Calu3 (cell line): ENCODE measurements at regions of chr15 and their contacts with region 1.

Region 1: DNA sequence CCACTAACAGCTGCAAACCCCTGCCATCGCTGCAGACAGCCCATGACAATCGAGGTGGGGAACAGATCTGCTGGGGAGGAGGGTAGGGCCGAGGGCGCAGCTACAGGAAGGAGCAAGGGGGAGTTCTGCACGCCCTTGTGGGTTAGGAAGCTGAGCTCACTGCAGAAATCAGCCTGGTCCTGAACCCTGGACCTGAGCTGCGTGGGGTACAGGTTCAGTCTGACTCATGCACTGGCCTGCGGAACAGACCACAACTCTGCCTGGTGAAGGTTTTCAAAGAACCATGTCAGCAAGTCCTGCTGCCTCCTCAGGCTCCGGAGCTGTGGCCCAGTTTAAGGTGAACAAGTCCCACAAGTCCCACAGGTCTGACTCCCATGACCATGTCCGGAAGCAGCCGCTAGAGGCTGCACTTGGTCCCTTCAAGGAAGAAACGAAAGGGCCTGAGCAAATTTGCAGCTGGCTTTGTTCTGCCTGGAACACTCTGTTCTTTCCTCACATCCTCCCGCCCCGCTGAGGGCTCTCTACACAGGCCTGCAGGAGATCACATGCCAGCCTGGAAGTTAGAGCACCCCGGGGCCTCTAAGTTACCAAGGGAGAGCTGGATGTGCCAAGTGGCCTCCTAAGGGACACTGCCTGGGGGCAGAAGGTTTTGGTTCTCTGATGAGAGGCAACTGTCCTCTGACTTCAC is 49.4 kb upstream of the AKAP13 start:
- DNase-seq: peak; percentile 89
- H3K4me3 Mint-ChIP-seq: peak overlapping the region; percentile 1
- H3K27ac Mint-ChIP-seq: peak overlapping the region; percentile 47
- H3K4me1 Mint-ChIP-seq: peaks cover 47% of the 10 kb centered on the region
- H3K27me3 Mint-ChIP-seq: no peaks in the 10 kb centered on the region
- CTCF ChIP-seq: peak; percentile 65

Region 2: DNA sequence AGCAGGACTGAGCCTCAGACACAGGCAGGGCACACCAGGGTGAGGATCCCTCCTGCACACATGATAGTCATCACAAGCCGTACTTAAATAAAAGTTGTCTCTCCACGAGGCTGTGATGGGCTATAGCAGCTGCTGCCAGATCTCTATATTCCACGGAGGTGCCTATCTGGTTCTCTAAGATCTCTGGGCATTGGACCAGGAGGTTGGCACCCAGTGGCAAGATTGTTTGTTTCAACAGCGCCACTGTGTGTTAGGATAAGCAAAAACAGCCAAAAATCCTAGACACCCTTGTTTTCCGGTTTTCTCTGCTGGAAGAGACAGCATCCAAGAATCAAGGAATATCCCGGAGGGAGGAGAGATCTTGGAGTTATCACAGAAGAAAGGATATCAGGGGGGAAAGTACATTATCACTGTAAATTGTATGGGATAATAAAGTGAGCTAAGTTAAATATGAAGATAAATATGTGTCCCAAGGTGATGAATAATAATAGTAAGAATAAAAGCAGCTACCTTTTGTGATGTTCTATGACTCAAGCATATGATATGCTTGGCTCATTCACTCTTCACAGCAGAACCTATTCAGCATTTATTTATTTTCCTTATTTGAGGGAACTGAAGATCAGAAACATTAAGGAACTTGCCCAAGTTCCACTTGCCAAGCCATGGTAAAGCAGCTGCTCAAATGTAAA is 41.2 kb before region 1 on chr15:
- CTCF ChIA-PET with region 1: interaction called, 4 read pairs
- intact Hi-C with region 1: loop called (anchors 5 kb)
- DNase-seq: peak; percentile 59
- H3K4me3 Mint-ChIP-seq: no peak overlapping the region
- H3K27ac Mint-ChIP-seq: no peak overlapping the region
- H3K4me1 Mint-ChIP-seq: no peaks in the 10 kb centered on the region
- H3K27me3 Mint-ChIP-seq: peaks cover 14% of the 10 kb centered on the region
- CTCF ChIP-seq: peak; percentile 48

Region 3: GRCh38 chr15:85380217-85380811 is 49.3 kb after region 1 on chr15 and contains the start of gene AKAP13:
- CTCF ChIA-PET with region 1: interaction called, 14 read pairs
- intact Hi-C with region 1: loop called (anchors 2 kb)
- DNase-seq: peak; percentile 98
- H3K4me3 Mint-ChIP-seq: peak within 1 kb of the TSS; percentile 76
- H3K27ac Mint-ChIP-seq: peak within 1 kb of the TSS; percentile 45
- H3K4me1 Mint-ChIP-seq: peaks cover 40% of the 10 kb centered on the region
- H3K27me3 Mint-ChIP-seq: no peaks in the 10 kb centered on the region
- CTCF ChIP-seq: no peak
- total RNA-seq, gene AKAP13: 145 and 169 TPM in 2 replicates

Region 4: GRCh38 chr15:85402195-85402881 is 71.3 kb after region 1 on chr15:
- CTCF ChIA-PET with region 1: interaction called, 11 read pairs
- intact Hi-C with region 1: no loop called
- DNase-seq: no peak
- H3K4me3 Mint-ChIP-seq: no peak overlapping the region
- H3K27ac Mint-ChIP-seq: peak overlapping the region; percentile 38
- H3K4me1 Mint-ChIP-seq: peaks cover 35% of the 10 kb centered on the region
- H3K27me3 Mint-ChIP-seq: no peaks in the 10 kb centered on the region
- CTCF ChIP-seq: no peak

Region 5: DNA sequence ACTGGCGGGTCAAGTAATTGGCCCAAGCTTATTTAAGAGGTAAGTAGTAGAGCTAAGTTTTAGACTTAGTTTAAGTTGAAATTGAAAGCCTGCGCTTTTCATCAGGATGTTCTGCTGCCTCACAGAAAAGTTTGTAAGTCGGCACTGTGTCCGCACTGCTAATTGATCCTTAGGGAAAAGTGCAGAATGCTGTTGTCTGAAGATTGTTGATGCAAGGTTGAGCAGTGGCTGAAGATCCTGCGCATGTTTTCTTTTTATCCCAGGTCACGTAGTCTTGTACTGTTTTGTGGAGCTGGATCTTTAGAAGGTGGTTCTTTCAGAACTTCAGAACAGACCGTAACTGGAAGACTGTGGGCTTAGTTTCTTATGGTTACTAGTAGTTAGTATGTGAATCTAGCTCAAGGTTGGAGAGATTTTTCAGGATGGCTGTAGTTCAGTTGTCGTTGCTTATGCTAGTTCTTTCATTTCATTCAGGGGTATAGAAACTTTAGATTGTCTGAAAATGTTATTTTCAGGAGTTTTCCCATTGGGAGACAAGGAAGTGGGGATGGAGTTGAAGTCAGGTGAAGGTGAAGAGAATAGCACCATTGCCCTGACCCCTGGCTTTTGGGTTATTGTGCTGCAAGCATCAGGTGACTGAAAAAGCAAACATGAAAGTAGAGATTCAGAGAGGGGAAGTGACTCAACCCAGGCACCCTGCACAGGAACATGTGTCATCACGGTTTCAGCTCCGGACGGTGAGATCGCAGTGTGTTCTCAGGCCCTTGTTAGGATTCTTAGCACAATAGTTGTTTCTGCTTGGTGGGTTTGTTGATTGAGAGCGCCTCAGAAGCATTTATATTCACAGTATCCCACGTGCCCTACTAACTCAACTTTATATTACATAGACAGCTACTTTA is 82.2 kb after region 1 on chr15:
- CTCF ChIA-PET with region 1: interaction called, 85 read pairs
- intact Hi-C with region 1: loop called (anchors 1 kb)
- DNase-seq: peak; percentile 79
- H3K4me3 Mint-ChIP-seq: peak overlapping the region; percentile 43
- H3K27ac Mint-ChIP-seq: peak overlapping the region; percentile 90
- H3K4me1 Mint-ChIP-seq: peaks cover 79% of the 10 kb centered on the region
- H3K27me3 Mint-ChIP-seq: no peaks in the 10 kb centered on the region
- CTCF ChIP-seq: no peak

Region 6: GRCh38 chr15:85494048-85494793 is 163.2 kb after region 1 on chr15:
- CTCF ChIA-PET with region 1: no interaction called
- intact Hi-C with region 1: no loop called
- DNase-seq: peak; percentile 59
- H3K4me3 Mint-ChIP-seq: peak overlapping the region; percentile 12
- H3K27ac Mint-ChIP-seq: peak overlapping the region; percentile 78
- H3K4me1 Mint-ChIP-seq: peaks cover 56% of the 10 kb centered on the region
- H3K27me3 Mint-ChIP-seq: no peaks in the 10 kb centered on the region
- CTCF ChIP-seq: no peak

Region 7: DNA sequence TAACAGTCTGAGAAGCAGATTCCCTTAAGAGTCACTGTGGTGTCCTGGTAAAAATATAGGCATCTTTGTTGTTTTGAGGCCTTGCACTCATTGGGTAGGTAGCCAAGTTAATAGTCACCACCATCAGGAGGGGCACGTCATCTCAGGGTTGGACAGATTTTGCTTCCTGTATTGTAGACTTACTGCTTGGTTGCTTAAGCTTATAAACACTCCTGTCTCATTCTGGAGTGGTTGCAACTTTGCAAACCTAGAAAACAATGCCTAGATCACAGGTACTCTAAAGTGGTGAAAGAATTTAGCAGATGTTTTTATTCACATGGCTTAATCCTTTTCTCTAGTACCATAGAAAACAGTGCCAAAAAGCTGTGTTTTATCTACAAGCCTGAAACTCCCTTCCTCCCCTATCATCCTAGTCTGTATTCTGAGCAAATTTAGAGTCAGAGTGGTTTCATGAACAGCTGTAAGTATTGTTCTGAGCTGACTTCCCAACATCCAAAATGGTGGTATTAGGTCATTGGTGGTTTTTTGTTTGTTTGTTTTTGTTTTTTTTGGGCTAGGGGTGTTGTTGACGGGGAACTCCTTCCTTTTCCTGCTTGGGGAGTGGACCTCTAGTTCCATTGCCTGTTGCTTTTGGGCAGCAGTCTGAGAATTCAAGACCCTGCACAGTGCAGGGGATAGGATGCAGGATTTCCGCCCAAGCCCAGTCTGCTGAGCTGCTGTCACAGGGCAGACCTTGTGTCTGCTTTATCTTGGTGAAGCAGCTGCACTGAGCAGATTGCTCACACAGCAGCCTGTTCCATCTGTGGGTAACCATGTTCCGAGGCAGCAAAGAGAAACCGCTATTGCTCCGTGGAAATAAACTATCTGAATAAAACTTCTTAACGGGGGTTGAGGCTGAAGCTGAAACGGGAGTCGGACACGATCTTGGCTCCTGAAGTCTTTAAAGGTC is 251.4 kb after region 1 on chr15:
- CTCF ChIA-PET with region 1: interaction called, 3 read pairs
- intact Hi-C with region 1: loop called (anchors 10 kb)
- DNase-seq: peak; percentile 45
- H3K4me3 Mint-ChIP-seq: peak overlapping the region; percentile 75
- H3K27ac Mint-ChIP-seq: peak overlapping the region; percentile 76
- H3K4me1 Mint-ChIP-seq: peaks cover 77% of the 10 kb centered on the region
- H3K27me3 Mint-ChIP-seq: no peaks in the 10 kb centered on the region
- CTCF ChIP-seq: no peak

Region 8: GRCh38 chr15:85625856-85626255 is 294.8 kb after region 1 on chr15:
- CTCF ChIA-PET with region 1: no interaction called
- intact Hi-C with region 1: no loop called
- DNase-seq: no peak
- H3K4me3 Mint-ChIP-seq: no peak overlapping the region
- H3K27ac Mint-ChIP-seq: no peak overlapping the region
- H3K4me1 Mint-ChIP-seq: peaks cover 26% of the 10 kb centered on the region
- H3K27me3 Mint-ChIP-seq: no peaks in the 10 kb centered on the region
- CTCF ChIP-seq: no peak